GM10248 (cell line): ENCODE measurements at regions of chr12 and their contacts with region 1.

Region 1: DNA sequence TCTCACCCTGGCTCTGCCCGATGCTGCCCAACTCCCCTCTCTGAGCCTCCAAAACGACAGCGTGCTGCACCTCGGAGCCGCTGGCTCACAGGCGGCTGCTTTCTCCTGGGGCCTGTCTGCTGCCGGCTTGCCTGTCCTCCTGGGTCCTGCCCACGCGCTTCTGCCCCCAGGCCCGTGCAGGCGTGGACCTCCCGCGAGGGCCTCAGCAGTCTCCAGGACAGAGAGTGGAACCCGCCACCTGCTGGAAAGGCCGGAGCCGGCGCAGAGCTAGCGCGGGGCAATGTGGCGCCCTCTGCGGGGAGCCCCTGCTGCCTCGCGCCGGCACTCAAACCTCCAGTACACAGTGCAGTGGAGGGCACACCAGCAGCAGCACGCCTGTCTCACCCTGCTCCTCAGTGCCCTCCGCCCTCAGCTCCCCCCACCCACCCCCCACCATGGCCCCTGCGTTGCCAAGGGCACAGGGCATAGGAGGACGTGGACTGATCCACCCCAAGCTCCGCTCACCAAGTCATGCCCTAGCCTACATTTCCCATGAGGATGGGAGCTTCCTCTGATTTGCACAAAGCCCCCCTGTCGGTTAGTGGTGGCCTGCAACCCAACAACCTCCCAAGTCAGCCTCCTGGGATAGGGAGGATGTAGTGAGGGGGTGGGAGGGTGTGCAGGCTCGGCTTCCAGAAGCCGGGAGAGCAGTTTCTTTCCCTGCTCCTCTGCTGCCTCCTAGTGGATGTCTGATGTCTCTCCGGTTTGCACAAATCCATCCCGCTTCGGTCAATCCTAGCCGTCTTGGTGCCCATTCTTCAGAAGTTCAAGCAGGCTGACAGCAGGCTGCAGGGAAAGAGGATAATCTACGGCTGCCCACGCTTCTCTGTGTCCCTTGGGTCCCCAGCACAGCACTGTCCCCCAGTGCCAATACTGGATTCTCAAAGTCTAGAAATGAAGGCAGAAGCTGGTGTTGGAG is 25.2 kb downstream of the KRT8 start:
- DNase-seq: peak; percentile 64
- CTCF ChIP-seq: peak; percentile 73

Region 2: DNA sequence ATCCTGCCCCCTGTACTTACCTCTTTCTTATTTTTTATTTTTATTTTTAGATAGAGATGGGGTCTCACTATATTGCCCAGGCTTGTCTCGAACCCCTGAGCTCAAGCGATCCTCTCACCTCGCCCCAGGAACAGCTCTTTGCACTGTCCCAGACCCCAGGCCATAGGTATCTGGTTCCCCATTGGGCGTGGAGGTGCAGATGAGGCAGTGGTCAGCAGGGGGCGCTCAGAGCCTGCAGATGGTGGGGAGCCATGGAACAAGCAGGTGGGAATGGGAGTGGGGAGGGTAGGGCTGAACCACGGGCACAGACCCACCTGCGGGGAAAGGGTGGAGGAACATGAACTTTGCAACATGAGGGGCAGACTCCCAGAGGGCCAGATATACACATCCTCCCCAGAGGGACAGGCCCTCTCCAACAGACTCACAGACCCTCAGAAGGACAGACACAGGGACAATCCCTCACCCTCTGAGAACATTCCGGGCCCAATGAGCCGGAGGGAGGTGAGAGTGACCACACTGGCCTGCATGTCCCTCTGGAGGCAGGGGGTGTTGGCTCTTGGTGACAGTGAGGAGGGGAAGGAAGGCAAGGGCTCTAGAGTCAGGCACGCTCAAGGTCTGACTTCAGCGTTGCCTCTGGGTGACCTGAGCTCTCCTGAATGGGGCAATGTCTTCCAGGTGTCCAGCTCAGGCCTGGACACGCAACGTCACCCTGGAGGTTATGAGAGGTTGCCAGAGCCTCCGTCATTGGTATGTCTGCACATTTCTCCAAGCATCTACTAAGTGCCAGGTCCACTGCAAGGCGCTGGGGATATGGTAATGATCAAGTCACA is 722.7 kb before region 1 on chr12:
- CTCF ChIA-PET with region 1: interaction called, 13 read pairs
- POLR2A ChIA-PET with region 1: no interaction called
- DNase-seq: peak; percentile 78
- CTCF ChIP-seq: peak; percentile 98

Region 3: DNA sequence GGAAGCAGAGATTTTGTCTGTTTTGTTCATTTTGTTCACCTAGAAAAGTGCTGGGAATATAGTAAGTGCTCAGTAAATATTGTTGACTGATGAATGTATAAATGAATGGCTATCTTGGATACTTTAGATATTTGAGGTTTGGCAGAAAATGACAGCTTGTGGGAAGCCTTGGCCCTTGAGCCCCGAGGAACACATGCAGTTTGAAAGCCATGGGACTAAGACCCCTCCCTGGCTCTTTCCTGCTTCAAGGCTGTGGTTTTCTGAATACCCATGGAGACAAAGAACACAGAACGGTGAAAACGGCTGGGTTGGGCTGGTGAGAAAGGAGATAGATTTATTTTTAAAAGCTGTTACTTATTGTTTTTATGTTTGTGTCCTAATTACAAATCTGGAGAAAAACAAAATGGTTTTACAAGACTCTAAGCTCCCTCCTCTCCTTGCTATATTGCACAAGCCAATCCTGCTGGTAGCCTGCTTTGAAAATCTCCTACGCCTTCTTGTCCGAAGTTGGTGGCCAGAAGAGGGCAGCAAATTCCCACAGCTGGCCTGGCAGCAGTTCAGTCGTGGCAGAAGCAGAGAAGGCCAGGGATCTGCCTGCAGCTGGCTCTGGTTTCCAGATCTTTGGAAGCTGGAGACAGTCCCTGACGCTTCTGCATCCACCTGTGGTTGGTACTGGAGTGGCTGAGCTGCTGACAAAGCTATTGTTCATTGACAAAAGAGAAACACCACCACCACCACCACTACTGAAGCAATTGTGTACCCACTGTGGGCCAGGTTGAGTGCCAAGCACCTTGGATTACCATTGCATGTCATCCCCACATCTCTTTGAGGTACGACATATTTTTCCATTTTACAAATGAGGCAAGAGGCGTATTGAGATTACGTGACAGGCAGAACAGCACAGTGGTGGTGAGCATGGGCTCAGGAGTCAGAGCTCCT is 507.2 kb before region 1 on chr12:
- CTCF ChIA-PET with region 1: interaction called, 53 read pairs
- POLR2A ChIA-PET with region 1: no interaction called
- DNase-seq: peak; percentile 69
- CTCF ChIP-seq: peak; percentile 79

Region 4: GRCh38 chr12:52582971-52583456 is 296.7 kb before region 1 on chr12:
- CTCF ChIA-PET with region 1: interaction called, 15 read pairs
- POLR2A ChIA-PET with region 1: no interaction called
- DNase-seq: peak; percentile 71
- CTCF ChIP-seq: peak; percentile 61

Region 5: GRCh38 chr12:52837413-52837741 is 42.3 kb before region 1 on chr12:
- CTCF ChIA-PET with region 1: no interaction called
- POLR2A ChIA-PET with region 1: no interaction called
- DNase-seq: no peak
- CTCF ChIP-seq: no peak

Region 6: DNA sequence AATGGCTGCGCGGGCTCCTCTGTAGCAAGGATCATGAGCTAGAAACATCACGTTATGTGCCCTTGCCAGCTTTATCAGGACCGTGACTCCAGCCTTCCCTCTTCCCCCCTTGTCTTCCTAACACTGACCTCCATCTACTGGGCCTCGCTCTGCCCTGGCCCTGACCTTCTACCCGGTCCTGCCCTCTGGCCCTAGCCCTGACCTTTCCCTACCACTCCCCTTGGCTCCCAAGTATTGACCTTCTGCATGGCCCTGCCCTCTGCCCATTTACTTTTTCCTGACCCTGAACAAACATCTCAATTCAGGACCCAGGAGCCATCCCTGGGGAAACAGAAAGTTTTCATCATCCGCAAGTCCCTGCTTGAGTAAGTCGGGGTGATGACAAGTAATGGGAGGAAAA is 225.6 kb after region 1 on chr12:
- CTCF ChIA-PET with region 1: no interaction called
- POLR2A ChIA-PET with region 1: no interaction called
- DNase-seq: no peak
- CTCF ChIP-seq: no peak